Right ventricle myocardium superior (tissue), 1 donor: ENCODE measurements at regions of chr2 and their contacts with region 1.

Region 1: DNA sequence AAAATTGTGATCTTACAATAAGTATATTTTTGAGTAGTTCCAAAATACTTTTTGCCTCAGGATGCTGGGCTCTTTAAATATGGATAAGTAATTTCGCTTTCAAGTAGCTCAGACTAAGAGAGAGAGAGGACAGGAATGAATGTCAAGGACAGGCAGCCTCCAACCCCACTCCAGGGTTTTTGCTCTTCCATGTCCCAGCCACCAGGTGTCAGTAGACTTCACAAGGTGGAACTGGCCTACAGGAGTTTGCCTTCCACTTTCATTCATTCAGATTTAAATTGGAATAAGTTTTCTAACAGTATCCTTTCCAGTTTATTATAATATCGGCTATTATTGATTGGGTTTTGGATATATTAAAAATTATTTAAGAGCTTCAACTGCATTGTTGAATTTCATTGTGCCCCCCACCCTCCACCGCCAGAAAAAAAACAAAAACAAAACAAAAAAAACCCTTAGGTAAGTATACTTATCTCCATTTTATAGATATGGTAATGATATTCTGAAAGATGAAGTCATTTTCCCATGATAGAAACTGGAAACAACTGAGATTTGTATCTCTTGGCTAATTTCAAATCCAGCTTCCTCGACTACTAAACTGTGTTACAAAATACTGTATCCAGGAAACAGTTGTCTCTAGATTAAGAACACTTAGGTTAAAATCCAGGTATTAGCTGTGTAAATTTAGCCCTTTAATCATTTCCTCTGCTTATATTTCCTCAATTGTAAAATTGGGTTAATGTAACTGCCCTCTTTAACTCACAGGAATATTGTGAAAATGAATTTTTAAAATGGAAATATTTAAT is 793.1 kb downstream of the ERBB4 start:
- DNase-seq: peak; percentile 44
- ATAC-seq: peak; percentile 95

Region 2: GRCh38 chr2:211930331-211930730 is 184.8 kb after region 1 on chr2:
- intact Hi-C with region 1: no loop called
- DNase-seq: no peak
- ATAC-seq: peak; percentile 80

Region 3: DNA sequence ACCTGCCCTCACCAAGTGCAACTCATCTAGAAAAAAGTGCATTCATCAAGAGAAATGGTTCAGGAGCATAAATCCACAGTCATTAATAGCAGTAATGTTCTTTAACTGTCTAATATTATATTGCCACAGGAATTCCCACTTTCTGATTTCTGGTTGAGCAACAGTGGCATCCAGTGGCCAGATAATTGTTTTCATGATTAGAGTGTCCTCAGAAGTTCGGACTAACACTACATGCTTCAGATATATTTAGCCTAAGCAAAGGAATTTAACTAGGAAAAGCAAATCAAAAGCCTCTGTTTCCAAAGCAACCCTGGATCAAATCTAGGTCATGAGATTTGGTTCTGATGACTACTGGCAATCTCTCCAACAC is 802.9 kb after region 1 on chr2:
- intact Hi-C with region 1: loop called (anchors 10 kb)
- DNase-seq: no peak
- ATAC-seq: peak; percentile 96